Activated naive CD8-positive, alpha-beta T cell treated with anti-CD3 and anti-CD28 coated beads, Interleukin-2, amount 10 ng/mL, durations not matched to agents 7 days and 5 days (primary cell): ENCODE measurements at regions of chr14 and their contacts with region 1.

Region 1: DNA sequence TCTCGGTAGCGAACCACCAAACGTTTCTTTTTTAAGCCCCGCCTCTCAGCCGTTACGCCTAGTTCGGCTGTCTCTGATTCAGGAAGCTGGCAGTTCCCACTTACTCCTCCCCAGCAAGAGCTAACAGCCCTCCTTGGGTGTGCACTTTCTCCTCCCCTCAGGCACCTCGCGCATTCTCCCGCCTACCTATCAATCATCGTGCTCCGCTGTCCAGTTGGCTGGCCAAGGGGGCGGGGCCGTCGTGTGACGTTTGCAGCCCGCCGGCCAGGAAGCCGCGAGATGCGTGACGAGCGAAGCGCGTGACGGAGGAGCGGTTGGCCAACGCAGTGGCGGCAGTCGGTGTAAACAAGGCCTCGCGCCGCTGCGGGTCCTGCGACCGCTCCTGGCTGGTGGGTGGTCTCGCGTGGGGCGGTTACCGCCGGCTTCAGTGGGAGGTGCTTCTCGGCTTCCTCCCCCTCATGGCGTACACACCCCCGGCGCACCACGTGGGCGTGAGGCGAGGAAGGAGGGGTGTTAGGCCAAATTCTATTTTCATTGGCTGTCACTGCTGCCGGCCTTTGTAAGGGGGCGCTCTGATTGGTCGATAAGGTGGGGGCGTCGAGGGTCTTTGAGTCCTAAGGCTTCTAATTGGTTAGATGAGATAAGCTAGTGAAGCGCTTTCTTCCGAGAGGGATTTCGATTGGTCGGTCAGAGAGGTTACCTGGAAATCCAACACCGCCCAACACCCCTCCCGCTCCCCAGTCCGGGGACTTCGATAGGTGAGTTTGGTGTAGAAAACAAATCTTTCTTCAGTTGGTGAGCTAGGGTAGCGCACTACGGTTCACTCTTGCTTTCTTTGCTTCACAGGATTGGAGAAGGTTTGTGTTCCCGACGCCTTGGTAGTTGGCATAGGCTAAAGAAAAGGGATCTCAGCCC is at the starts of genes DCAF11 and NRL:
- DNase-seq: peak; percentile 99
- ATAC-seq: peak; percentile 89
- H3K4me3 Mint-ChIP-seq: peak within 1 kb of the TSS; percentile 99
- H3K27ac Mint-ChIP-seq: peak within 1 kb of the TSS; percentile 99
- H3K4me1 Mint-ChIP-seq: peaks cover 24% of the 10 kb centered on the region
- H3K27me3 Mint-ChIP-seq: no peaks in the 10 kb centered on the region
- total RNA-seq, gene DCAF11: 100 to 105 TPM
- total RNA-seq, gene NRL: 3.3 to 3.4 TPM

Region 2: GRCh38 chr14:24093901-24094761 is 20.7 kb before region 1 on chr14 and contains the start of gene PCK2:
- POLR2A ChIA-PET with region 1: interaction called, 116 read pairs
- DNase-seq: peak; percentile 83
- ATAC-seq: peak; percentile 77
- H3K4me3 Mint-ChIP-seq: peak within 1 kb of the TSS; percentile 95
- H3K27ac Mint-ChIP-seq: peak within 1 kb of the TSS; percentile 97
- H3K4me1 Mint-ChIP-seq: peaks cover 29% of the 10 kb centered on the region
- H3K27me3 Mint-ChIP-seq: no peaks in the 10 kb centered on the region
- total RNA-seq, gene PCK2: 47.4 to 50.6 TPM

Region 3: DNA sequence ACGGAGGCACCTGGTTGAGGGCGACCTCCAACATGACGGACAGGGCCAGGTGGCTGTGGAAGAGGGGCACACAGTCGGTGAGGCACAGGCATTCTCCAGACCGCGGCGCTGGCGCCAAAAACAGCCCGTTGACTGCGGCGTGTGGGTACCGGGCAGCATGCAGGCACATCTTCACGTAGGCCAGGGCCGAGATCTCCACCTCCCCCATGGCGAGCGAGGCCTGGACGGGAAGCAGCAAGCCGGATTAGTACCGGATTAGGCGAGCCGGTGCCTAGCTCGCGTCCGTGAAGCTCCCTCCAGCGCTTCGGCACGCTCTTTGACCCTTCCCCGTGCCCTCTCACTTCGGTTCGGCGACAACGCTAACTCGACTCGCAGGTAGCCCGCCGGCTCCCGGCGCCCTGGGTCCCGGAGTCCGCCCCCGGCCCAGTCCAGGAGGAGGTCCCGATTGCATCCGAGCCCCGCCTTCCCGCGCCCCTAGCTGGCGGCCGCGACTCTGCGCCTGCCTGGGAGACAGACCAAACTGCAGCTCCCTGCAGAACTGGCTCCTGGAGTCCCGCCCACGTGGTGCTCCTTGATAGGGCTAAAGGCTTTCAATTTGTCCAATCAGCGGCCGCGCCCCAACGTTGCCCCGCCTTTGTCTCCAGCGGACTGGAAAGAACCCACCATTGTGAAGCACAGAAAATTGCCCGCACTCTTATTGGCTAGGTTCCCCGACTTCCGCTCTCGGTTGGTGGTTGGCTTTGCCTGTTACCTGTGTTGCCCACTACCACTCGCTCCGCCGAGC is 26.5 kb after region 1 on chr14 and contains the start of gene EMC9:
- POLR2A ChIA-PET with region 1: interaction called, 176 read pairs
- DNase-seq: peak; percentile 96
- ATAC-seq: peak; percentile 91
- H3K4me3 Mint-ChIP-seq: peak within 1 kb of the TSS; percentile 100
- H3K27ac Mint-ChIP-seq: peak within 1 kb of the TSS; percentile 98
- H3K4me1 Mint-ChIP-seq: peaks cover 63% of the 10 kb centered on the region
- H3K27me3 Mint-ChIP-seq: no peaks in the 10 kb centered on the region
- total RNA-seq, gene EMC9: 41.6 to 43.9 TPM

Region 4: GRCh38 chr14:24195191-24196070 is 80.6 kb after region 1 on chr14 and contains the start of gene TM9SF1:
- POLR2A ChIA-PET with region 1: interaction called, 10 read pairs
- DNase-seq: peak; percentile 93
- ATAC-seq: peak; percentile 93
- H3K4me3 Mint-ChIP-seq: peak within 1 kb of the TSS; percentile 97
- H3K27ac Mint-ChIP-seq: peak within 1 kb of the TSS; percentile 96
- H3K4me1 Mint-ChIP-seq: peaks cover 42% of the 10 kb centered on the region
- H3K27me3 Mint-ChIP-seq: no peaks in the 10 kb centered on the region
- total RNA-seq, gene TM9SF1: 28.9 to 29.6 TPM